ENCODE measurements at regions of chr3 and their contacts with region 1.

Region 1: DNA sequence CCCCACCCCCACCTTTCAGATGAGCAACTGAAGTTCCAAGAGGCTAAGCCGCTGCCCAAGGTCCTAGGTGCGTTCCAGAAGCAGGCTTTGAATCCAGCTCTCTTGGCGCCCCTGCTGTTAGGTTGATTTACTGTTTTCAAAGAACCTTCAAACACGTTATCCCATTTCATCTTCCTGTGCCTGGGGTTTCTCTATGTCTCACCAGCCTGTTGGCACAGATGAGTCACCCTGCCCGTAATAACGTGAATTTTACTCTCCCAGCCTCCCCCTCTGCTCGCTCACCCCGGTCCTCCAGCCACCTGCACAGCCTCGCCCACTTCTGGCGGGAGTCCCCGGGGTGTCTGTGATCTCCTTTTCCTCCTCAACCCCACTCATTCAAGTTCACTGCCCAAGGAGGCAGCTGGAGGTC is 13.0 kb upstream of the TSEN2 start:
- DNase-seq: no peak
- H3K4me3 ChIP-seq: no peak overlapping the region
- H3K27ac ChIP-seq: no peak overlapping the region
- H3K27me3 ChIP-seq: no peaks in the 10 kb centered on the region
- CTCF ChIP-seq: peak; percentile 11

Region 2: GRCh38 chr3:12175844-12176453 is 295.3 kb before region 1 on chr3:
- in situ Hi-C with region 1: loop called (anchors 25 kb)
- DNase-seq: peak; percentile 38
- H3K4me3 ChIP-seq: no peak overlapping the region
- H3K27ac ChIP-seq: no peak overlapping the region
- H3K27me3 ChIP-seq: no peaks in the 10 kb centered on the region
- CTCF ChIP-seq: peak; percentile 92

Region 3: DNA sequence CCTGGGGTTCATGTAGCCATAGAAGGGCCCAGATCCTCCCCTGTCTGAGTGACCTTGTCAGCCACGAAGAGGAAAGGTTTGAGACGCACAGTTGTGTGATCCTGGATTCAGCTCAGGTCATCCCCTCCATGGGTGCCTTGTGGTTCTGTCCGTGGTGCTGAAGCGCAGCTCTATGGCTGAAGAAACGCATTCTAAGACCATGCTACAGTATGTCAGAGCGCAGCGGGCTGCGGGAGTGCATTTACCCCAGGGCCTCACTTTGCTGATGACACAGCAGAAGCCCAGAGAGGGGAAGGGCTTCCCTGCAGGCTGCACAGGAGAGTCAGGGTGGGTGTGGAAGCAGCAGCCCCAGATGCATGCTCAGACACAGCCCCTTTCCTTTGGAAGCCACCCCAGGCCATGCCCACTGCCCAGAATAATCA is 670.8 kb after region 1 on chr3:
- in situ Hi-C with region 1: no loop called
- DNase-seq: peak; percentile 54
- H3K4me3 ChIP-seq: no peak overlapping the region
- H3K27ac ChIP-seq: no peak overlapping the region
- H3K27me3 ChIP-seq: no peaks in the 10 kb centered on the region
- CTCF ChIP-seq: no peak

Measured in brain microvascular endothelial cell (primary cell).